Right cardiac atrium (tissue), 5 donors: ENCODE measurements at regions of chr6 and their contacts with region 1.

Region 1: GRCh38 chr6:33579828-33580714 is at the start of gene BAK1:
- DNase-seq: peak; percentile 94 to 97 (median 96)
- ATAC-seq: peak; percentile 94 to 95
- H3K4me3 ChIP-seq: peak within 1 kb of the TSS; percentile 93
- H3K27ac ChIP-seq: peak within 1 kb of the TSS; percentile 55
- H3K4me1 ChIP-seq: peaks cover 5% of the 10 kb centered on the region
- H3K27me3 ChIP-seq: no peaks in the 10 kb centered on the region
- total RNA-seq, gene BAK1: 14.6 to 17.8 (median 16.7) TPM

Region 2: GRCh38 chr6:33633462-33634158 is 53.5 kb after region 1 on chr6:
- intact Hi-C with region 1: loop called in 3 of 4 experiments (anchors 5 to 10 kb)
- DNase-seq: peak; percentile 82 to 93 (median 93)
- ATAC-seq: peak; percentile 82 to 85
- H3K4me3 ChIP-seq: peak overlapping the region; percentile 27
- H3K27ac ChIP-seq: peak overlapping the region; percentile 9
- H3K4me1 ChIP-seq: no peaks in the 10 kb centered on the region
- H3K27me3 ChIP-seq: no peaks in the 10 kb centered on the region

Region 3: DNA sequence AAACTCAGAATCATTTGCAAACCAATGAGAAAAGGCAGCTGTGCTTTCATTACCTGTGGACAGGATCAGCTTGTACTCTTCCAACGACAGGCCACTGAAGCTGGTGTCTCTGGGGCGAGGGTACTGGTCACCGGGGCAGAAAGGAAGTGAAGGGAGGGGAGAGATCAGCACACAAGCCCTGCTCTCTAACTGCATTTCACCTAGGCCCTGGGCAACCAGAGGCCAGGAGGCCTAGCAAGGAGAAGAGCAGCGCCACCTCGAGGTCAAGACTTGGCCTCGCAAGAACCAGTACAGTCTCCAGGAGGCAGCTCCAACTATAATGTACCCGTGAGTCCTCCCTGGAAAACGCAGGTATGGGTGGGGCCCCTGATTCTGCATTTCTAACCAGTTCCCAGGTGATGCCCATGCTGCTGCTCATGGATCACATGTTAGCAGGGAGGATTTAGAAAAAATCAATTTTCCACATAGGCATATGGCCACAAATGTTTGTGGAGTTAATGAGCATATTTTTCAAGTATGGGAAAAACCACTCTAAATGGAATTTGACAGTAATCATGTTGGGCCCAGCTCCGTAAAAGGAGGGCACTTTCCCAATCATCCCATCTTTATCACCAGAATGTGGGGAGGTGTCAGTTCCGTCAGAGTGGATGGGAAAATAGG is 120.5 kb after region 1 on chr6:
- intact Hi-C with region 1: loop called in 3 of 4 experiments (anchors 5 to 10 kb)
- DNase-seq: peak; percentile 56 to 84 (median 82)
- ATAC-seq: peak; percentile 23 to 50
- H3K4me3 ChIP-seq: no peak overlapping the region
- H3K27ac ChIP-seq: no peak overlapping the region
- H3K4me1 ChIP-seq: peaks cover 21% of the 10 kb centered on the region
- H3K27me3 ChIP-seq: no peaks in the 10 kb centered on the region

Region 4: GRCh38 chr6:33771146-33772081 is 191.3 kb after region 1 on chr6:
- intact Hi-C with region 1: loop called in 1 of 4 experiments (anchors 10 kb)
- DNase-seq: peak; percentile 77 to 91 (median 88)
- ATAC-seq: peak; percentile 78 to 85
- H3K4me3 ChIP-seq: no peak overlapping the region
- H3K27ac ChIP-seq: peak overlapping the region; percentile 3
- H3K4me1 ChIP-seq: peaks cover 3% of the 10 kb centered on the region
- H3K27me3 ChIP-seq: no peaks in the 10 kb centered on the region